A673 (cell line): ENCODE measurements at regions of chr3 and their contacts with region 1.

Region 1: GRCh38 chr3:128969993-128970739 is 23.7 kb downstream of the CFAP92 start:
- DNase-seq: peak; percentile 69
- H3K4me3 ChIP-seq: no peak overlapping the region
- H3K27ac ChIP-seq: no peak overlapping the region
- H3K4me1 ChIP-seq: no peaks in the 10 kb centered on the region
- H3K27me3 ChIP-seq: no peaks in the 10 kb centered on the region
- CTCF ChIP-seq: peak; percentile 97

Region 2: GRCh38 chr3:128845778-128846485 is 124.2 kb before region 1 on chr3:
- CTCF ChIA-PET with region 1: no interaction called
- POLR2A ChIA-PET with region 1: no interaction called
- intact Hi-C with region 1: no loop called
- DNase-seq: peak; percentile 83
- H3K4me3 ChIP-seq: peak overlapping the region; percentile 42
- H3K27ac ChIP-seq: peak overlapping the region; percentile 48
- H3K4me1 ChIP-seq: peaks cover 15% of the 10 kb centered on the region
- H3K27me3 ChIP-seq: no peaks in the 10 kb centered on the region
- CTCF ChIP-seq: peak; percentile 53

Region 3: DNA sequence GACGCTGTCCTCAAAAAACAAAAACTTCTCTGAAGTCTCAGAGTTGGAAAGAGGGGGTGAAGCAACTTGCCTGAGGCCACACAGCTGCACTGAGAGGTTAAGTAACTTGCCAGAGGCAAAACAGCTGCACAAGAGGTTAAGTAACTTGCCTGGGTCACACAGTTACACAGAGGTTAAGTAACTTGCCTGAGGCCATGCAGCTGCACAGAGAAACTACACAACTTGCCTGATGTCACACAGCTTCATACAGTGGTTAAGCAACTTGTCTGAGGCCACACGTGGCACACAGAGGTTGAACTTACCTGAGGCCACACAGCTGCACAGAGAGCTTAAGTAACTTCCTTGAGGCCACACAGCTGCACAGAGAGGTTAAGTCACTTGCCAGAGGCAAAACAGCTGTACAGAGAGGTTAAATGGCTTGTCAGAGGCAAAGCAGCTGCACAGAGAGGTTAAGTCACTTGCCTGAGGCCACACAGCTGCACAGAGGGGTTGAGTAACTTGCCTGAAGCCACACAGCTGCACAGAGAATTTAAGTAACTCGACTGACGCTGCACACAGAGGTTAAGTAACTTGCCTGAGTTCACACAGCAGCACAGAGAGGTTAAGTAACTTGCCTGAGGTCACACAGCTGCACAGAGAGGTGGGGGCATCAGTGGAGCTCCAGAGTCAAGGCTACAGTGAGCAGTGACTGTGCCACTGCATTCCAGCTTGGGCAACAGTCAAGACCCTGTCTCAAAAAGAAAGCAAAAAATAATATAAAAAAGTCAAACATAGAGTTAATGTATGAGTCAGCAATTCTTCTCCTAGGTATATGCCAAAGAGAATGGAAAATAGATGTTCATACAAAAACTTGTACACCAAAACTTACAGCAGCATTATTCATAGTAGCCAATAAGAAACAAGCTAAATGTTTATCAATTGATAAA is 102.7 kb before region 1 on chr3:
- CTCF ChIA-PET with region 1: no interaction called
- POLR2A ChIA-PET with region 1: no interaction called
- intact Hi-C with region 1: no loop called
- DNase-seq: no peak
- H3K4me3 ChIP-seq: no peak overlapping the region
- H3K27ac ChIP-seq: no peak overlapping the region
- H3K4me1 ChIP-seq: peaks cover 4% of the 10 kb centered on the region
- H3K27me3 ChIP-seq: no peaks in the 10 kb centered on the region
- CTCF ChIP-seq: no peak

Region 4: GRCh38 chr3:128993461-128994173 is 23.5 kb after region 1 on chr3 and contains the start of gene CFAP92:
- CTCF ChIA-PET with region 1: interaction called, 11 read pairs
- POLR2A ChIA-PET with region 1: no interaction called
- intact Hi-C with region 1: no loop called
- DNase-seq: peak; percentile 85
- H3K4me3 ChIP-seq: peak within 1 kb of the TSS; percentile 50
- H3K27ac ChIP-seq: no peak within 1 kb of the TSS
- H3K4me1 ChIP-seq: peaks cover 6% of the 10 kb centered on the region
- H3K27me3 ChIP-seq: no peaks in the 10 kb centered on the region
- CTCF ChIP-seq: no peak
- total RNA-seq, gene CFAP92: 0.26 TPM in 1 of 2 replicates, not detected in the other

Region 5: GRCh38 chr3:129052675-129053074 is 82.5 kb after region 1 on chr3:
- CTCF ChIA-PET with region 1: interaction called, 24 read pairs
- POLR2A ChIA-PET with region 1: no interaction called
- intact Hi-C with region 1: no loop called
- DNase-seq: no peak
- H3K4me3 ChIP-seq: no peak overlapping the region
- H3K27ac ChIP-seq: no peak overlapping the region
- H3K4me1 ChIP-seq: no peaks in the 10 kb centered on the region
- H3K27me3 ChIP-seq: no peaks in the 10 kb centered on the region
- CTCF ChIP-seq: no peak

Region 6: DNA sequence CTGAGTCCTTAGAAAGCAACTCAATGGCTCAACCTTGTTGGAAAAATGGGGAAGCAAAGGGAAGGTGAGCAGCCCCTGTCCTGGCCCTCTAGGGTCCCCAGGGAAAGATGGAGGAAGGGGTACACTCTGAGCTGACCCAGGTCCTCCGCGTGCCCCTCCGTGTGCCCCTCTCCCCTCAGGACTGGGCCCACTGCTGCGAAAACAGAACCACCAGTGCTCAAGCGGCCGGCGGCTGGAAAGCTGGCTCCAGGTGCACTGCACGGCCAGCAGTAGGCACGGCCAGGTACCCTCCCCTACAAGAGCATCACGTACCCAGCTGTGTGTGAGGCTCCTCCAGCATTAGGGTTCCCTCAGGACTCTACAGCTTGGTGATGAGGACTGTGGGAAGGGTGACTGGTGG is 125.1 kb after region 1 on chr3:
- CTCF ChIA-PET with region 1: no interaction called
- POLR2A ChIA-PET with region 1: no interaction called
- intact Hi-C with region 1: loop called (anchors 10 kb)
- DNase-seq: no peak
- H3K4me3 ChIP-seq: no peak overlapping the region
- H3K27ac ChIP-seq: no peak overlapping the region
- H3K4me1 ChIP-seq: no peaks in the 10 kb centered on the region
- H3K27me3 ChIP-seq: no peaks in the 10 kb centered on the region
- CTCF ChIP-seq: no peak

Region 7: DNA sequence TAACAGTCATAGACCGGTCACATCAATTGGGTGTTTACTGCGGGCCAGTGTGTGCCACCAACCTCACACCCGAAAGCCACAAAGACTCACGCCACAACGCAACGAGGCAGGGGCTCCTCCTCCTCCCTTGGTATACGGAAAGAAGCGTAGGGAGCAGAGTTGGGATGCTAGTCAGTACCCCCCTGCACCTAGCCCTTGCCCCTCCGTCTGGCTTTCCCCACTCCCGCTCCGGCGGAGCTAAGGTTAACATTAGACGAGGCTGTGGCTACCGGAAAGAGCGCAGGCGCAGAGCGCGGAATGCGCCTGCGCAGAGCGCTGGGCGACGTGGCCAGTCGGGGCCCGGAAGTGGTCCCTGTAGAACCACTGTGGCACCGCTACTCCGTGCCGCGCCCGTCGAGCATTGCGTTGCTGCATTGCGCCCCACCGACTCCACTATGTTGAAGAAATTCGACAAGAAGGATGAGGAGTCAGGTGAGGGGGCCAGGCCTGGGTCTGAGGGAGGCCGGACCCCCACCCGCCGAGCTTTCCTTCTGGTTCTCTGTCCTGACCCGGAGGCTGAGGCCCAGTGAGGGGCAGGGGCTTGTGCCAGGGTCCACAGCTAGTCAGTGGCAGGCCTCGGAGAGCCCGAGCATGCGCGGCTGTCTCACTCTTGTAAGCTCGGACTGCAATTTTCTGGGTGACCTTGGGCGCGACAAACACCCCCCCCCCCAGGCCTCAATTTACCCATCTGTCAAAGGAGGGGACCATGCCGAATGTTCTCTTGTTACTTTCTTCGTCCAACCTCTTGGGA is 279.3 kb after region 1 on chr3 and contains the start of gene COPG1:
- CTCF ChIA-PET with region 1: interaction called, 35 read pairs
- POLR2A ChIA-PET with region 1: no interaction called
- intact Hi-C with region 1: loop called (anchors 1 kb)
- DNase-seq: peak; percentile 92
- H3K4me3 ChIP-seq: peak within 1 kb of the TSS; percentile 93
- H3K27ac ChIP-seq: peak within 1 kb of the TSS; percentile 91
- H3K4me1 ChIP-seq: no peaks in the 10 kb centered on the region
- H3K27me3 ChIP-seq: no peaks in the 10 kb centered on the region
- CTCF ChIP-seq: no peak
- total RNA-seq, gene COPG1: 157 and 158 TPM in 2 replicates

Region 8: GRCh38 chr3:129316131-129317013 is 346.2 kb after region 1 on chr3:
- CTCF ChIA-PET with region 1: interaction called, 20 read pairs
- POLR2A ChIA-PET with region 1: no interaction called
- intact Hi-C with region 1: no loop called
- DNase-seq: peak; percentile 88
- H3K4me3 ChIP-seq: peak overlapping the region; percentile 98
- H3K27ac ChIP-seq: peak overlapping the region; percentile 88
- H3K4me1 ChIP-seq: peaks cover 11% of the 10 kb centered on the region
- H3K27me3 ChIP-seq: no peaks in the 10 kb centered on the region
- CTCF ChIP-seq: peak; percentile 84